Transverse colon (tissue), 4 donors: ENCODE measurements at regions of chr11 and their contacts with region 1.

Region 1: DNA sequence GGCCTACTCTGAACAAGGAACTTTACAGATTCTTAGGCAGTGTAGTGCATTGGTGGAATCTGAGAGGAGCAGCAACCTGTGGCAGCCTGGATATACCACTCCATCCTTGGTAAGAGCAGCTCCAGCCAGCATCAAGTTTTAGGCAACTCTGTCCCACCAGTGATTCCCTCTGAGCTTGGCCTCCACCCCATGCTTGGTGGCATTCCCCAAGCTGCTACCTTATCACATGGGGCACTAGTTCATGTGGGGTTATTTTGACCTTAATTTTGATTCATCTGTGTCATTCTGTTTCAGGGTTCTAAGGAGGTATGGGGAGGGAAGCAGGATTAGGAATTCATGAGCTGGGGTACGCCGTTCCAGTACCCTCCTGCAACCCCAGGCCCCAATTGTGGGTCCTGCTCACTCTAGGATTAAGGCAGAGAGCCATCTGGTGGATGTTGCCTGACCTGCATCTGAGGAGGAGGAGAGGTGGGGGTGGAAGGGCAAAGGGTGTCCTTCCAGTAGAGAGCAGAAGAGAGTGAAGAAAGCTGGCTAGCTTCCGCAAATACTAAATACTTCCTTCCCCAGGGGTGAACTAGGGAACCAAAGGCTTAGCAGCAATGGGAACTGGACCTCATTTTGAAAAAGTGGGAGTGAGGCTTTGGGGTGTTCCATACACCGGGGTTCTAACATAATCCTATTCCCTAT is 10.5 kb downstream of the LRRC51 start:
- DNase-seq: peak; percentile 82
- H3K4me3 ChIP-seq: no peak overlapping the region
- H3K27ac ChIP-seq: peak overlapping the region; percentile 27 to 68 (median 51)
- H3K4me1 ChIP-seq: peaks cover 0 to 16% (median 9%) of the 10 kb centered on the region in 4 donors
- H3K27me3 ChIP-seq: no peaks in the 10 kb centered on the region
- CTCF ChIP-seq: peak; percentile 81 to 96 (median 89)
- EP300 ChIP-seq: no peak
- POLR2A ChIP-seq: no peak

Region 2: GRCh38 chr11:70796648-70797227 is 1294.4 kb before region 1 on chr11:
- in situ Hi-C with region 1: no loop called
- intact Hi-C with region 1: no loop called
- DNase-seq: no peak
- H3K4me3 ChIP-seq: no peak overlapping the region
- H3K27ac ChIP-seq: no peak overlapping the region
- H3K4me1 ChIP-seq: no peaks in the 10 kb centered on the region
- H3K27me3 ChIP-seq: no peaks in the 10 kb centered on the region
- CTCF ChIP-seq: no peak
- EP300 ChIP-seq: no peak
- POLR2A ChIP-seq: no peak

Region 3: DNA sequence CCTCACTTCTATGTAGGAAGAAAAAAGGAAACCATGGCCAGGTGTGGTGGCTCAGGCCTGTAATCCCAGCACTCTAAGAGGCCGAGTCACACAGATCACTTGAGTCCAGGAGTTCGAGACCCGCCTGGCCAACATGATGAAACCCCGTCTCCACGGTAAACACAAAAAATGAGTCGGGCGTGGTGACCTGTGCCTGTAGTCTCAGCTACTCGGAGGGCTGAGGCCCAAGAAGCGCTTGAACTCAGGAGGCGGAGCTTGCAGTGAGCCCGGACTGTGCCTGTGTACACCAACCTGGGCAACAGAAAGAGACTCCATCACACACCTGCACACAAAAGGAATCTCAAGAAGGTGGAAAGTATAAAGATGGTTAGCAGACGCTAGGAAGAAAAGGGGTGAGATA is 195.2 kb before region 1 on chr11:
- in situ Hi-C with region 1: no loop called
- intact Hi-C with region 1: no loop called
- DNase-seq: no peak
- H3K4me3 ChIP-seq: no peak overlapping the region
- H3K27ac ChIP-seq: no peak overlapping the region
- H3K4me1 ChIP-seq: no peaks in the 10 kb centered on the region
- H3K27me3 ChIP-seq: no peaks in the 10 kb centered on the region
- CTCF ChIP-seq: no peak
- EP300 ChIP-seq: no peak
- POLR2A ChIP-seq: no peak

Region 4: GRCh38 chr11:71991494-71991893 is 99.7 kb before region 1 on chr11:
- in situ Hi-C with region 1: no loop called
- intact Hi-C with region 1: no loop called
- DNase-seq: no peak
- H3K4me3 ChIP-seq: no peak overlapping the region
- H3K27ac ChIP-seq: no peak overlapping the region
- H3K4me1 ChIP-seq: peaks cover 0 to 6% (median 4%) of the 10 kb centered on the region in 4 donors
- H3K27me3 ChIP-seq: no peaks in the 10 kb centered on the region
- CTCF ChIP-seq: no peak
- EP300 ChIP-seq: no peak
- POLR2A ChIP-seq: no peak

Region 5: GRCh38 chr11:72024069-72024754 is 66.9 kb before region 1 on chr11:
- in situ Hi-C with region 1: loop called in 3 of 4 experiments (anchors 5 to 10 kb)
- intact Hi-C with region 1: loop called (anchors 1 kb)
- DNase-seq: no peak
- H3K4me3 ChIP-seq: no peak overlapping the region
- H3K27ac ChIP-seq: peak overlapping the region in 3 of 4 donors; percentile 63 to 83 (median 75)
- H3K4me1 ChIP-seq: peaks cover 20 to 52% (median 23%) of the 10 kb centered on the region in 4 donors
- H3K27me3 ChIP-seq: no peaks in the 10 kb centered on the region
- CTCF ChIP-seq: no peak
- EP300 ChIP-seq: no peak
- POLR2A ChIP-seq: no peak

Region 6: DNA sequence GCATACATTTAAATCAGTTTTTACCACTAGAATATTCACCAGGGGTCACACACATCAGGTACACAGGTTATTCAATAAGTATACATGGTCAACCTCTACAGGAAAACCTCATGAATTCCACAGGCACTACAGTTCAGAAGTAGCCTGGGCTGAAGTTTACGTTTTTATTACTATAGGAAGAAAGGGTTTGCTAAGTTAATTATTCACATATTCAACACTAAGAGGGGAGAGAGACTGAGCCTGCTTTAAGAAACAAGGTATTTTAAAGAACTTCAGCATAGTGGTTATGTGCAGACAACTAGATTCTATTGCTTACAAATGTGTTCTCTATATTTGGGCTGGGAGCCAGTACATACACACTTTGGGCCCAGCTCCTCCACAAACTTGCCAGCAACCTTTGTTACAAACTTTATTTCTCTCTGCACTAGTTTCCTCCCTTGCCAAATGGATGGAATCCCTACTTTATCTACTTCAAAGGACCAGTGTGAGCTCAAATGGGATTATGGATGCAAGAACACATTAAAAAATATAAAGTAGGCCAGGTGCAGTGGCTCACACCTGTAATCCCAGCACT is 60.6 kb before region 1 on chr11:
- in situ Hi-C with region 1: loop called in 2 of 4 experiments (anchors 10 kb)
- intact Hi-C with region 1: loop called (anchors 1 kb)
- DNase-seq: no peak
- H3K4me3 ChIP-seq: peak overlapping the region in 1 of 4 donors; percentile 1
- H3K27ac ChIP-seq: peak overlapping the region; percentile 0 to 58 (median 51)
- H3K4me1 ChIP-seq: peaks cover 27 to 83% (median 50%) of the 10 kb centered on the region in 4 donors
- H3K27me3 ChIP-seq: no peaks in the 10 kb centered on the region
- CTCF ChIP-seq: no peak
- EP300 ChIP-seq: no peak
- POLR2A ChIP-seq: no peak

Region 7: DNA sequence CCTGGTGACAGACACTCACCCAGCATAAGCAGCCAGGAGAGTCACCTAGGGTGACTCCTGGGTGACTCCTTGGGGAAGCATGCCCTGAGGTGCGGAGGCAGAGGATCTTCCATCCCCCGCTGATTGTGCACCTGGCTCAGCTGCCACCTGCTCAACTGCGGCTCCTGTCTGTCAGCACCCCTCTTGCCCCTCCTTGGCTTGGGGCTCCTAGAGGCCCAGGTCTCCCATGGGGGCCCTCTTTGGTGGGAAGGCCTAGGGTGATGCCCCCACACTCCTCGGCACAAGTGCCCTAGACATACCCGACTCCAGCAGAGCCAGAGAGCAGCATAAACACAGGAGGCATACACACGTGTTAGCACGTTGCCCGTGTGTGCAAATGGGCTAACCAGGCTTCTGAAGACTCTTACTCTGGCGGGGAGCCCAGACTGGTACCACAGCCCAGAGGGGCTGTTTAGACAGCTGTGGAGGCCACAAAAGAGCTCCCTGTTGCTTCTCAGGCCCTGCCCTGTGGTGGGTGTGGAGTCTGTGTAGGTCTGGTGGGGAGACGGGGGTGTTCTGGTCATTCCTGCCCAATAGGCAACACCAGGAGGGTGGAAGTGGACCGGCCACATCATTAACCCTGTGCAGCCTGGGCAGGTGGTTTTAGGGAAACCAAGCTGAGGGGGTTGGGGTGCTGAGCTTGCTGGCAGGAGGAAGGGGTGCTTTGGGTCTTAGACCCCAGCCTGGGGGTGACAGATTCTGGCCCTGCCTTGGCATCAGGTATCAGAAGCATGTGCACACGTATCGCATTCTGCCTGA is 136.5 kb after region 1 on chr11:
- in situ Hi-C with region 1: no loop called
- intact Hi-C with region 1: no loop called
- DNase-seq: no peak
- H3K4me3 ChIP-seq: no peak overlapping the region
- H3K27ac ChIP-seq: no peak overlapping the region
- H3K4me1 ChIP-seq: peaks cover under 1 to 20% (median 16%) of the 10 kb centered on the region in 4 donors
- H3K27me3 ChIP-seq: no peaks in the 10 kb centered on the region
- CTCF ChIP-seq: no peak
- EP300 ChIP-seq: no peak
- POLR2A ChIP-seq: no peak